ENCODE measurements at regions of chr5 and their contacts with region 1.

Region 1: GRCh38 chr5:131338051-131338453 is 74.2 kb downstream of the CDC42SE2 start:
- DNase-seq: no peak
- H3K4me3 Mint-ChIP-seq: no peak overlapping the region
- H3K27ac Mint-ChIP-seq: peak overlapping the region; percentile 46
- H3K4me1 Mint-ChIP-seq: peaks cover 48% of the 10 kb centered on the region
- H3K27me3 Mint-ChIP-seq: no peaks in the 10 kb centered on the region

Region 2: GRCh38 chr5:131296213-131296672 is 41.8 kb before region 1 on chr5:
- intact Hi-C with region 1: loop called (anchors 5 kb)
- DNase-seq: no peak
- H3K4me3 Mint-ChIP-seq: no peak overlapping the region
- H3K27ac Mint-ChIP-seq: peak overlapping the region; percentile 71
- H3K4me1 Mint-ChIP-seq: peaks cover 40% of the 10 kb centered on the region
- H3K27me3 Mint-ChIP-seq: no peaks in the 10 kb centered on the region

Measured in activated T-helper 2 cell treated with anti-CD3 and anti-CD28 coated beads, Interferon-gamma antibody, Interleukin-2, Interleukin-4, amounts not matched to agents 10 μg/mL and 5 μg/mL and 100 μg/mL, durations not matched to agents 14 hours and 24 hours and 36 hours (primary cell).